ENCODE measurements at regions of chr20 and their contacts with region 1.

Region 1: GRCh38 chr20:2349818-2350508 is 30.7 kb upstream of the TGM6 start:
- DNase-seq: no peak
- ATAC-seq: no peak
- H3K4me3 ChIP-seq: no peak overlapping the region
- H3K27ac ChIP-seq: no peak overlapping the region
- H3K4me1 ChIP-seq: no peaks in the 10 kb centered on the region
- H3K27me3 ChIP-seq: peaks cover 0 to 36% (median 11%) of the 10 kb centered on the region in 9 donors
- CTCF ChIP-seq: no peak
- POLR2A ChIP-seq: no peak

Region 2: GRCh38 chr20:2051946-2052345 is 298.0 kb before region 1 on chr20:
- intact Hi-C with region 1: no loop called
- DNase-seq: no peak
- ATAC-seq: no peak
- H3K4me3 ChIP-seq: no peak overlapping the region
- H3K27ac ChIP-seq: no peak overlapping the region
- H3K4me1 ChIP-seq: no peaks in the 10 kb centered on the region
- H3K27me3 ChIP-seq: peaks cover 0 to 13% (median 5%) of the 10 kb centered on the region in 9 donors
- CTCF ChIP-seq: no peak
- POLR2A ChIP-seq: no peak

Region 3: GRCh38 chr20:2206957-2207769 is 142.8 kb before region 1 on chr20:
- intact Hi-C with region 1: loop called in 2 of 10 experiments (anchors 2 to 5 kb)
- DNase-seq: peak; percentile 59 to 87 (median 74)
- ATAC-seq: peak; percentile 52 to 88 (median 83)
- H3K4me3 ChIP-seq: peak overlapping the region; percentile 9 to 65 (median 56)
- H3K27ac ChIP-seq: no peak overlapping the region
- H3K4me1 ChIP-seq: peaks cover 0 to 29% (median 9%) of the 10 kb centered on the region in 12 donors
- H3K27me3 ChIP-seq: peaks cover 0 to 44% (median 19%) of the 10 kb centered on the region in 9 donors
- CTCF ChIP-seq: peak; percentile 59 to 87 (median 73)
- POLR2A ChIP-seq: no peak

Region 4: GRCh38 chr20:2451939-2452732 is 102.2 kb after region 1 on chr20:
- intact Hi-C with region 1: loop called in 1 of 10 experiments (anchors 2 kb)
- DNase-seq: peak; percentile 63 to 70 (median 67)
- ATAC-seq: peak in 3 of 4 donors; percentile 65 to 82 (median 78)
- H3K4me3 ChIP-seq: no peak overlapping the region
- H3K27ac ChIP-seq: no peak overlapping the region
- H3K4me1 ChIP-seq: peaks cover 0 to 5% (median 0%) of the 10 kb centered on the region in 12 donors
- H3K27me3 ChIP-seq: no peaks in the 10 kb centered on the region
- CTCF ChIP-seq: peak; percentile 70 to 92 (median 80)
- POLR2A ChIP-seq: no peak

Measured in heart left ventricle (tissue), 16 donors.